Activated CD4-positive, alpha-beta memory T cell treated with anti-CD3 and anti-CD28 coated beads for 36 hours (primary cell): ENCODE measurements at regions of chr19 and their contacts with region 1.

Region 1: GRCh38 chr19:18104793-18105131 is 7.2 kb downstream of the MAST3 start:
- DNase-seq: no peak
- H3K4me3 Mint-ChIP-seq: peak overlapping the region; percentile 59
- H3K27ac Mint-ChIP-seq: peak overlapping the region; percentile 54
- H3K4me1 Mint-ChIP-seq: peaks cover 15% of the 10 kb centered on the region
- H3K27me3 Mint-ChIP-seq: no peaks in the 10 kb centered on the region

Region 2: DNA sequence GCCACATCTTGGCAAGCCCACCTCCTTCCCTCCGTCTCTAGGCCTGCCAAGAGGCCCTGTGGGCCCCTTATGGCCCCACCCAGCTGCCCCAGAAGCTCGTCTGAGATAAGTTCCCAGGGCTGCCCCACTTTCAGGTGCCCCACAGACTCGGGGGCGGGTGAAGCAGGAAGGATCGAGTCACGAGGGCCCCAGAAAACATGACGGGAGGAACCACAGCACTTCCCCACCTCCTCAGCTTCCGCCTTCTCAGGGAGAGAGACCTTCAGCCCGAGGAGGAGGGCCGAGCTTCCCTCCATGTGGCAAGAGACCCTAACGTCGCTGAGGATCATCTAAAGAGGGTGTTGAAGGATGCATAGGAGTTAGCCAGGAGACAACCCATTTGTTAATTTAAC is 13.5 kb before region 1 on chr19:
- CTCF ChIA-PET with region 1: interaction called, 4 read pairs
- POLR2A ChIA-PET with region 1: interaction called, 5 read pairs
- intact Hi-C with region 1: loop called (anchors 2 kb)
- DNase-seq: peak; percentile 93
- H3K4me3 Mint-ChIP-seq: peak overlapping the region; percentile 60
- H3K27ac Mint-ChIP-seq: peak overlapping the region; percentile 92
- H3K4me1 Mint-ChIP-seq: peaks cover 51% of the 10 kb centered on the region
- H3K27me3 Mint-ChIP-seq: no peaks in the 10 kb centered on the region